ENCODE measurements at regions of chr3 and their contacts with region 1.

Region 1: GRCh38 chr3:181719991-181720680 is 8.4 kb downstream of the SOX2 start:
- DNase-seq: peak; percentile 45
- H3K4me3 Mint-ChIP-seq: no peak overlapping the region
- H3K27ac Mint-ChIP-seq: no peak overlapping the region
- H3K4me1 Mint-ChIP-seq: peaks cover 2% of the 10 kb centered on the region
- H3K27me3 Mint-ChIP-seq: peaks cover 90% of the 10 kb centered on the region

Region 2: GRCh38 chr3:180036671-180037455 is 1683.3 kb before region 1 on chr3 and contains the start of gene PEX5L:
- intact Hi-C with region 1: loop called (anchors 5 kb)
- DNase-seq: peak; percentile 84
- H3K4me3 Mint-ChIP-seq: peak within 1 kb of the TSS; percentile 68
- H3K27ac Mint-ChIP-seq: no peak within 1 kb of the TSS
- H3K4me1 Mint-ChIP-seq: peaks cover 9% of the 10 kb centered on the region
- H3K27me3 Mint-ChIP-seq: peaks cover 48% of the 10 kb centered on the region
- total RNA-seq, gene PEX5L: 0.12 and 0.17 TPM in 2 replicates